Prostate gland (tissue), 2 donors: ENCODE measurements at regions of chr13 and their contacts with region 1.

Region 1: DNA sequence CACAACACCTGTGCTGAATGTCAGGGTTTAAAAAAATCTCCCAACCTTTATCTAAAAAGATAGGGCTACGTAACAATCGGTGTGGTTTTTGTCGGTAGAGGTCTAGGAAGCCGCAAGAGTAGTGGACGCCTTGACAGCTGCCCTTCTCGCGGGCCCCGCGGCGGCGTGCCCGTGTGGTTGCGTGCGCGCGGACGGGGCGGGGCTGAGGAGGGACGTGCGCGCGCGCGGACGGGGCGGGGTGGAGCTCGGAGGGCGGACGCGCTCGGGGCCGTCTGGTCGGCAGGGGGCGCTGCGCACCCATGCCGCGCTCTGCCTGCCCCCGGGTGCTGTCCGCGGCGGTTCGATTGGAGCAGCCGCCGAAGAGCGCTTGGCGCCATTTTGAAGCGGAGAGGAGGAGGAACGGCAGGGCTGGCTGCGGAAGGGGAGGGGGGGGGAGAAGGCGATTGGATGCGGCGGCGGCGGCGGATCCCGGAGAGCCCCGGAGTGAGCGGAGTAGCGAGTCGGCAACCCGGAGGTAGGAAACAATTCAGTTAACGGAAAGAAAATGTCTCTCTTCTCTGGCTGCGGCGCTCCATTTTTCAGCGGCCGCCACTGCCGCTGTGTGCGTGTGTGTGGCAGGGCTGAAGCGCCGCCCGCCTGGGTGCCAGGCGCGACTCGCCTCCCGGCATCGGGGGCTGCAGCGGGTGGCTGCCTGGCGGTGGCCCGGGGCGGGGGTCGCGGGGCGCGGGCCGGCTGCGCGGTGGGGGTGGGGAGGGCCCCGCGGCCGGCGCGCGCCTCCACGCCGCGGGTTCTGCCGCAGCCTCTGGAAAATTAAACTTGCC is at the start of gene PDS5B:
- DNase-seq: peak; percentile 95
- H3K4me3 ChIP-seq: peak within 1 kb of the TSS; percentile 76 to 85
- H3K27ac ChIP-seq: peak within 1 kb of the TSS; percentile 95 to 97
- H3K4me1 ChIP-seq: no peaks in the 10 kb centered on the region
- H3K27me3 ChIP-seq: no peaks in the 10 kb centered on the region
- CTCF ChIP-seq: peak; percentile 95 to 99 (median 98)
- POLR2A ChIP-seq: peak; percentile 66
- total RNA-seq, gene PDS5B: 37.0 to 63.3 TPM

Region 2: DNA sequence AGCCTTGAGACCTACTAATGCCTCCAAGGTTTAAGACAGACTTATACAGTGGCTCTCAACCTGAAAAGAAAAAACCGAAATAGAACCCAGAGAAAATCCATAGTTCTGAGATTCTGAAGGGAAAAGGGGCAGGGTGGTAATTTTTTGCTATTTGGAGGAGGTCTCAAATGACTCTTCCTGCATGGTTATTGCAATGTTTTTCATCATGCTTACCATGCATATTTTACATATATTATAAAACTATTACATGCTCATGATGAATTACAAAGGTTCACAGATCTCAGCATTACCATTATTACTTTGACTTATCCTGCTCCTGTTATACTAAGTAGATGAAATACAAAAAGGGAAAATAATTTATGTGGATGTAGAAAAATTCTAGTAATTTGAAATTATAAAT is 95.3 kb before region 1 on chr13:
- intact Hi-C with region 1: no loop called
- DNase-seq: no peak
- H3K4me3 ChIP-seq: no peak overlapping the region
- H3K27ac ChIP-seq: no peak overlapping the region
- H3K4me1 ChIP-seq: no peaks in the 10 kb centered on the region
- H3K27me3 ChIP-seq: no peaks in the 10 kb centered on the region
- CTCF ChIP-seq: no peak
- POLR2A ChIP-seq: no peak

Region 3: DNA sequence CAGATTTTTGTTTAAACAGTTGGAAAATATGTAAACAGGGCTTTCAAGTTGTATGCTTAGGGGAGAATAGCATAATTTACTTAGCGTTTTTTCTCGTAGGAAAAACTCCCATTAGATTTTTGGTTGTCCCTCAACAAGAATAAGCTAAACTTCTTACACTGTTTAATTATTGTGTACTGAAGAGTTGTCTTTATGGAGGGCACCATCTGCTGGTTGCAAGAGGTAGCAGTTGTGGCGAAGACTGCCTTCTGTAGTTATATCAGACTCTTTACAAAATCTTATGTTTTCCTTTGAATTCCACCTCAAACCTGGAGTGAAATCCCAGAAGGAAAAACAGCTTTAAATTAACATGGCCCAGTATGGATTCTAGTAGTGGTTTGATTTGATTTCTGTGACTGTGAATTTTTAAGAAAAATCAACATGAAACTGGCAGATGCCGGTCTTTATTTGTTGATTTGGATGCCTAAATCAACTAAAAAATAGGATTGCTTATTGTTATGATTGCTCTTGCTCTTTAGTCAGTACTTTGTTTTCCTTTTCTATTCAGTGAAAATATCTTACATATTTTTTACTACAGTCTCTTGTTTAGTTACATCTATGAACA is 53.3 kb after region 1 on chr13:
- intact Hi-C with region 1: loop called (anchors 1 kb)
- DNase-seq: peak; percentile 55
- H3K4me3 ChIP-seq: no peak overlapping the region
- H3K27ac ChIP-seq: no peak overlapping the region
- H3K4me1 ChIP-seq: no peaks in the 10 kb centered on the region
- H3K27me3 ChIP-seq: no peaks in the 10 kb centered on the region
- CTCF ChIP-seq: peak in 3 of 4 experiments; percentile 70 to 74 (median 72)
- POLR2A ChIP-seq: no peak